ENCODE measurements at regions of chr15 and their contacts with region 1.

Region 1: GRCh38 chr15:60496853-60497252 is 17.9 kb upstream of the ICE2 start:
- DNase-seq: no peak
- H3K4me3 ChIP-seq: no peak overlapping the region
- H3K27ac ChIP-seq: no peak overlapping the region
- H3K4me1 ChIP-seq: no peaks in the 10 kb centered on the region
- H3K27me3 ChIP-seq: no peaks in the 10 kb centered on the region
- CTCF ChIP-seq: no peak
- EP300 ChIP-seq: no peak
- POLR2A ChIP-seq: no peak
- RAD21 ChIP-seq: no peak

Region 2: DNA sequence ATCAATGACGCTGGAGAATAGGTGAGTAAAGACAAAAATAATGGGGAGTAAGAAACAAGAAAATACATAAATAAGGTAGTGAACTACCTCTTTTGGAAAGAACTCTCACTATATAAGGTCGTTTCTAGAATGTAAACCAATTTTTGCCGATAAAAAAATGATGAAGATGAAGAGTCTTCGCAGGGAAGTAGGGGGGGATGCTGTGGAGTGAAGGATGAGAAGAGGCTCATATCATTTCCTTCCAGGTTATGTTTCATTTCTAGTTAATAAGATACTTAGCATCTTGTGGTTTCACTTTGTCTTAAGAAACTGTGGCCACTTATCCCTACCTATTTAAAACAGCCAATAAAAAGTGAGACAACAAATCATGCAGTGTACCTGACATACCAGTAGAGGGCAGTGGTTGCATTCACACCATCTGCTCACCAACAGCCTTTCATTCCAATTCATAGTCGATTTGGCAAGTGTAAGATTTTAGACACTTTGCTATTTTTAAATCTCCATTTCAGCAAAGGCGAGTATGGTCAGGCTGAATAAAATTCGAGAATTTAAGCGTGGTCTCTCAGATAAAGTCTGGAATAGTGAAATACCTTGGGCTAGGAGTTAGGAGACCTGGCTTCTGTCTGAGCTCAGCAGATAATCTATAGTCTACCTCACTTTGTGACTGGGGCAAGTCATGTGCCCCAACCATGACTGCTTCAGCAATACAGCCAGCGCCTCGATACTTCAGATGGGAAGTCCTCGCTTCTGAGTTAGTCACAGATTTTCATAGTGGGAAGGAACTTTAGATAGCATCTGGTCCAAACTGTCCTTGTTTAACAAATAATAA is 11.0 kb after region 1 on chr15:
- CTCF ChIA-PET with region 1: interaction called, 31 read pairs
- POLR2A ChIA-PET with region 1: no interaction called
- DNase-seq: peak in 1 of 2 experiments; percentile 54
- H3K4me3 ChIP-seq: no peak overlapping the region
- H3K27ac ChIP-seq: no peak overlapping the region
- H3K4me1 ChIP-seq: peaks cover 0 to 3% (median 0%) of the 10 kb centered on the region in 4 experiments; a peak in 2 of 7 replicates
- H3K27me3 ChIP-seq: no peaks in the 10 kb centered on the region; a peak in 1 of 7 replicates
- CTCF ChIP-seq: peak in 2 of 3 experiments; percentile 75 to 91; a peak in 3 of 4 replicates
- EP300 ChIP-seq: no peak
- POLR2A ChIP-seq: no peak
- RAD21 ChIP-seq: peak; percentile 86 to 88

Measured in H1 (cell line).